ENCODE measurements at regions of chr2 and their contacts with region 1.

Region 1: DNA sequence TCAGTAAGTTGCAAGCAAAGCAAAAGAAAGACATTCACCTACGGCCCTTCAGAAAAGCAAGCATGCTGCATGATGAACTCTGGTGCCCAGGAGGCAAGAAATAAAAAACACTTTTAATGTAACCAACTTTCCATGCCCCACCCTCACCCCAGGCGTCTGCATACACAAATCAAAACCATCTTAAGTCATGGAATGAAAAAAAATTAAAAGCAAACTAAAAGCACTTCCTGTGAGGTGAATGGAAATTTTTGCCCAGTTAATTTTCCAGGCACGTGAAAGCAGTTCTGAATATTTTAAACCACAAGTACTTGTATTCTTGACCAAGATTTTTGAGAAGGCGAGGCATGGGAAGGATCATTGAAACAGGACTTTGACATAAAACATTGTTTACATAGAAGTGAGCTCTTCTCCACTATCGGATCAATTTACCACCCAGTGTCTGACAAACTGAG is 2.5 kb upstream of the ICOS start:
- DNase-seq: peak; percentile 78
- H3K4me3 Mint-ChIP-seq: peak overlapping the region; percentile 51
- H3K27ac Mint-ChIP-seq: peak overlapping the region; percentile 96
- H3K4me1 Mint-ChIP-seq: peaks cover 64% of the 10 kb centered on the region
- H3K27me3 Mint-ChIP-seq: no peaks in the 10 kb centered on the region

Region 2: DNA sequence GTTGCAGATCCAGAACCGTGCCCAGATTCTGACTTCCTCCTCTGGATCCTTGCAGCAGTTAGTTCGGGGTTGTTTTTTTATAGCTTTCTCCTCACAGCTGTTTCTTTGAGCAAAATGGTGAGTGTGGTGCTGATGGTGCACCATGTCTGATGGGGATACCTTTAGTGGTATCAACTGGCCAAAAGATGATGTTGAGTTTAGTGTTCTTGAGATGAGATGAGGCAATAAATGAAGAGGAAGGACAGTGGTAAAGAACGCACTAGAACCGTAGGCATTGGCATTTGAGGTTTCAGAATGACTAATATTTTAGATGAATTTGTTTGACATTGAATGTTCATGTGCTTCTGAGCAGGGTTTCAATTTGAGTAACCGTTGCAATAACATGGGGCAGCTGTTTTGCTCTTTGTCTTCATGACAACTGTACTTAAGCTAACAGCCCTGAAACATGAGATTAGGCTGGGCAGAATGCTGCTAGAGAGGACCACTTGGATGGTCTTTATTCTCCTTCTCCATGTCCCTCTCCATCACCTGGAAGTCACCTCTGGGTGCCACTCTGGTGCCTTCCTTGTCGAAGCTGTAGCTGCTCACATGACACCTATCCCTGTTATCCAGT is 62.6 kb before region 1 on chr2:
- CTCF ChIA-PET with region 1: interaction called, 5 read pairs
- intact Hi-C with region 1: loop called (anchors 1 kb)
- DNase-seq: peak; percentile 69
- H3K4me3 Mint-ChIP-seq: peak overlapping the region; percentile 92
- H3K27ac Mint-ChIP-seq: peak overlapping the region; percentile 99
- H3K4me1 Mint-ChIP-seq: peaks cover 55% of the 10 kb centered on the region
- H3K27me3 Mint-ChIP-seq: no peaks in the 10 kb centered on the region

Region 3: DNA sequence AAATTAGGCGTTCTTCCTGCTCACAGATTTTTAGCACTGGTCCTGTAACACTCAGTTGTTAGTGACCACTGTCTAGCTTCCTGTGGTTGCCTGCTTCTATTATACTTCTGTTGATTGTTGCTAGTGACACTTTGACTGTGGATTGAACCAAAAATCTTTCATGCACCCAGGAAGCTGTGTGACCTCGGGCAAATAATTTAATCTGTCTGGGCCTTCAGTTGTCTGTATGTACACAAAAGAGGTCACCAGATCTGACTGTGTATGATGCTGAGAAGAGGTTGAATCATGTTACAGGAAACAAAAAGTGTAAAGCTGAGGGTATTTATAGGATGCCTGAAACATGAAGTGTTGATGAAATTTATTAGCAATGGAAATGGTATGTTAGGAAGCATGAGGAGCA is 15.2 kb after region 1 on chr2:
- CTCF ChIA-PET with region 1: interaction called, 6 read pairs
- intact Hi-C with region 1: loop called (anchors 1 kb)
- DNase-seq: no peak
- H3K4me3 Mint-ChIP-seq: peak overlapping the region; percentile 42
- H3K27ac Mint-ChIP-seq: peak overlapping the region; percentile 70
- H3K4me1 Mint-ChIP-seq: peaks cover 87% of the 10 kb centered on the region
- H3K27me3 Mint-ChIP-seq: no peaks in the 10 kb centered on the region

Region 4: GRCh38 chr2:203989521-203989920 is 55.5 kb after region 1 on chr2:
- CTCF ChIA-PET with region 1: interaction called, 4 read pairs
- intact Hi-C with region 1: loop called (anchors 2 kb)
- DNase-seq: no peak
- H3K4me3 Mint-ChIP-seq: no peak overlapping the region
- H3K27ac Mint-ChIP-seq: peak overlapping the region; percentile 80
- H3K4me1 Mint-ChIP-seq: peaks cover 14% of the 10 kb centered on the region
- H3K27me3 Mint-ChIP-seq: no peaks in the 10 kb centered on the region

Region 5: DNA sequence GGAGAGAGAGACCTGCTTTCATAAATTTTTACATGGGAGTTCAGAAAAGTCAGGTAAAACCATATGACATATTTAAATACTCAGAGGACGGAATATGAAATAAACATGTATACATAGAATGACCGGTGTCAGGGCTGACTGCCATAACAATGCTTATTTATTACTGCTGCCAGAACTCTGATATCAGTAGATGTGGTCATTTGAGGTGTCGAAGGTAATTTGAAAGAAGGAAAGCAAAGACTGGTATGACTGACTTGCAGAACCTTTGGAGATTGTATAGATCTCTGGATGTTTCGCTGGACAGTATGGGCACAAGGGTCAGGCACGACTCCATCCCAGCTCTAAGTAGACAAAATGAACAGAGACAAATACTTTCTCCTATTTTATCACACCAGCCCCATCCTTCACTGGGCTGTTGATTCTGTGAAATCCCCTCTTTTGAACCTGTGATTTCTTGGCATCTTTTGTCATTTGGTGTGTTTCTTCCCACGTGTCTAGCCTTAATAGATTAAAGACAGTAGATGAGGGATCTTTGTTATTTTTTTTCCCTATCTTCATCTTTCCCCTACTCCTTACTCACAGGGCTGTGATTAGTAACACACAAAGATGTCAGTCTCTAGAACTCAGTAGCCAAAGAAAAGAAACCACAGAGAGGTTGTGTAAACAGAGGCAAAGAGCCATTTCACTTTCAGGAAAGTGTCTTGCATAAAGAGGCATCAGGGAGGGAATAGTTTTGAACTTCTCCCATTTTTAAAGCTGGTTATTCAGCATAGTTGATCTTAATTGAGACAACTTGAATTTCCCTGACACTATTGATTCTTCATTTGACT is 64.1 kb after region 1 on chr2:
- CTCF ChIA-PET with region 1: interaction called, 6 read pairs
- intact Hi-C with region 1: loop called (anchors 1 kb)
- DNase-seq: no peak
- H3K4me3 Mint-ChIP-seq: peak overlapping the region; percentile 4
- H3K27ac Mint-ChIP-seq: peak overlapping the region; percentile 77
- H3K4me1 Mint-ChIP-seq: peaks cover 68% of the 10 kb centered on the region
- H3K27me3 Mint-ChIP-seq: no peaks in the 10 kb centered on the region

Region 6: DNA sequence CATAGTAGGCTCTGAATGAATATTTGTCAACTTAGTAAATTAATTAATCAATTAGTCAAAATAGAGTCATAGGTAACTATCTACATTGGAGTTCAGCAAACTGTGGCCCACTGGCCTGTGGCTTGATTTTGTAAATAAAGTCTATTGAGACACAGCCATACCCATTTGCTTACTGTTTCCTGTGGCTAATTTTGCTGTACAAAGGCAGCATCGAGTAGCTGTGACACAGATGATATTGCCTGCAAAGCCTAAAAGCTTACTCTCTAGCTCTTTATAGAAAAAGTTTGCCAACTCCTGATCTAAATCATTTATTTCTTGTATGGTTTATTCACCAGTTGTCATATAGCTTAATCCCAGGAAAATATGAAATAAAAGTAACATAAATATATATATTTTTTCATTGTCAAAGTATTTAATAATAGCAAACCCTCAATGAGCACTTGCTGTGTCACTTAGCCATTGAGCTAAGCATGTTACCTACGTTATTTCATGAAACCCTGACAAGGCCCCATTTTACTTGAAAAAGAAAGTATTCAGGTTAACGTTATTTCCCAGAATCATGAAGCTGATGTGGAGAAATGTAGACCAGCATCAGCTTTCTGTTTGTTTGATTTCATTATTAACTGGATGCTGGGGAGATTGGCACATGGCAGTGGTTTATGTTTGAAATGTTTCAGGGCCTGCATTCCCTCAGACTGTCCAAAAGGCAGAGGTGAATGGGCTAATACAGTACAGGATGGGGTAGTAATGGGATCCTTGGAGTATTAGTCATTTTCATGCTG is 72.1 kb after region 1 on chr2:
- CTCF ChIA-PET with region 1: interaction called, 5 read pairs
- intact Hi-C with region 1: loop called (anchors 1 kb)
- DNase-seq: peak; percentile 40
- H3K4me3 Mint-ChIP-seq: no peak overlapping the region
- H3K27ac Mint-ChIP-seq: peak overlapping the region; percentile 96
- H3K4me1 Mint-ChIP-seq: peaks cover 95% of the 10 kb centered on the region
- H3K27me3 Mint-ChIP-seq: no peaks in the 10 kb centered on the region

Region 7: DNA sequence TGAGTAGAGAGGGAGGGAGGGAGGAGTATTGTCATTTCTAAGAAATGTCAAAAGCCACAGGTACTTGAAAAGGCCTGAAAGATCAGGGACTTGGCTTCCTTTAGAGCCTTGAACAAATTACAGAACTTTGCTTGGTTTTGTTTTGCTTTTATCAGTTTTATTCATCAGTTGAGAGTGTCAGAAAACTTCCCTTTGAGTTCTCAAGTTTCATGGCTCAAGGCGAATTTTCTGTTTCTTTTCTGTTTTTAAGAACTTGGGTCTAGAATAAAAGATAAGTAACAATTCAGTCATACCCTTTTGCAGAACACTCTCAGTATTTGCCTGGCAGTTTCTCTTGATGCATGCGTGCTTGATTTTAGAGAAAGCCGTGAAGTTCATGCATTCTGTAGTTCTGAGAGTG is 1143.1 kb after region 1 on chr2:
- CTCF ChIA-PET with region 1: no interaction called
- intact Hi-C with region 1: loop called (anchors 10 kb)
- DNase-seq: peak; percentile 9
- H3K4me3 Mint-ChIP-seq: peak overlapping the region; percentile 46
- H3K27ac Mint-ChIP-seq: peak overlapping the region; percentile 50
- H3K4me1 Mint-ChIP-seq: peaks cover 53% of the 10 kb centered on the region
- H3K27me3 Mint-ChIP-seq: no peaks in the 10 kb centered on the region